Psoas muscle (tissue), 8 donors: ENCODE measurements at regions of chr4 and their contacts with region 1.

Region 1: GRCh38 chr4:166363198-166363597 is 490.2 kb downstream of the TLL1 start:
- DNase-seq: no peak
- ATAC-seq: no peak
- H3K4me3 ChIP-seq: no peak overlapping the region
- H3K27ac ChIP-seq: no peak overlapping the region
- H3K4me1 ChIP-seq: no peaks in the 10 kb centered on the region
- H3K27me3 ChIP-seq: no peaks in the 10 kb centered on the region
- CTCF ChIP-seq: no peak

Region 2: GRCh38 chr4:166816890-166817289 is 453.7 kb after region 1 on chr4:
- intact Hi-C with region 1: loop called in 1 of 2 experiments (anchors 5 kb)
- DNase-seq: no peak
- ATAC-seq: peak in 1 of 4 donors; percentile 19
- H3K4me3 ChIP-seq: no peak overlapping the region
- H3K27ac ChIP-seq: no peak overlapping the region
- H3K4me1 ChIP-seq: no peaks in the 10 kb centered on the region
- H3K27me3 ChIP-seq: no peaks in the 10 kb centered on the region
- CTCF ChIP-seq: no peak